ENCODE measurements at regions of chr1 and their contacts with region 1.

Region 1: DNA sequence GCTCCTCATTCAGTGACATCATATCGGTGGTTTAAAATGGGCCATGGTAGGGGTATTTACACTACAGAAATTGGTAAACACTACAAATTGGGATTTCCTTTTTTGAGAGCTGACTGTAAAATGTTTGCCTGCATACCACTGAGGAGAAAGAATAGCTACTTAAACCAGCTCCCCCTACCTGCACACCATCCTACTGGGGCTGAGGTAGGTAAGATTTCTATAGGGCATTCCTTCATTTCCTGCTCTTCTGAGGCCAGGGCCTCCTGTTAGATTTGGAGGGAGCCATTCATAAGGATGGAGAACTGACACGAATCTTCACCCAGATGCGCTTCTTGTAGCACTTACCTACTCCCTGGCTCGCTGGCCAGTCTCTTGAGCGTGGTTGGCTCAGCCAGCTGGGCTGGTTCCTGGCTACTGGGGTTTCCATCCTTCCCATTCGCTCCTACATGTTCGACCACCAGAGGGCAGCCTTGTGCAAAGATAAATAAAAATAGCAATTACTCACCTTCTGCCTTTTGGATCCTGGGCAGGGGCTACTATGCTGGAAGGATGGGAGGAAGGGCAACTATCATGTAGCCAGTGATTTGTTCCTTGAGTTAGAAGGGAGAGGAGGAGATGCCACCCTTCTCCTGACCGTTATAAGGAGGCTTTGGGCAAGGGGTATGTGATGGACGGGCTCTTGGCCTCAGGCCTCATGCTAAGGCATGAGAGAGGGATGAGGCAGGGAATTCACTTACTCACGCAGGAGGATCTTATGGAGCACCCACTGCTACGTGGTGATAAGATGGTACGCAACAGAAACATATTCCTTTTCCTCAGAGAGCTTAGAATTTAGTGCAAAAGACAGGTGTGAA is 10.7 kb downstream of the OPTC start:
- DNase-seq: peak; percentile 86
- H3K4me3 ChIP-seq: no peak overlapping the region; a peak in 1 of 4 replicates
- H3K27ac ChIP-seq: peak overlapping the region in 1 of 2 experiments; percentile 37; a peak in 1 of 4 replicates
- H3K4me1 ChIP-seq: peaks cover 25 to 30% of the 10 kb centered on the region in 2 experiments
- H3K27me3 ChIP-seq: no peaks in the 10 kb centered on the region
- CTCF ChIP-seq: peak; percentile 87
- EP300 ChIP-seq: no peak
- RAD21 ChIP-seq: peak; percentile 92

Region 2: DNA sequence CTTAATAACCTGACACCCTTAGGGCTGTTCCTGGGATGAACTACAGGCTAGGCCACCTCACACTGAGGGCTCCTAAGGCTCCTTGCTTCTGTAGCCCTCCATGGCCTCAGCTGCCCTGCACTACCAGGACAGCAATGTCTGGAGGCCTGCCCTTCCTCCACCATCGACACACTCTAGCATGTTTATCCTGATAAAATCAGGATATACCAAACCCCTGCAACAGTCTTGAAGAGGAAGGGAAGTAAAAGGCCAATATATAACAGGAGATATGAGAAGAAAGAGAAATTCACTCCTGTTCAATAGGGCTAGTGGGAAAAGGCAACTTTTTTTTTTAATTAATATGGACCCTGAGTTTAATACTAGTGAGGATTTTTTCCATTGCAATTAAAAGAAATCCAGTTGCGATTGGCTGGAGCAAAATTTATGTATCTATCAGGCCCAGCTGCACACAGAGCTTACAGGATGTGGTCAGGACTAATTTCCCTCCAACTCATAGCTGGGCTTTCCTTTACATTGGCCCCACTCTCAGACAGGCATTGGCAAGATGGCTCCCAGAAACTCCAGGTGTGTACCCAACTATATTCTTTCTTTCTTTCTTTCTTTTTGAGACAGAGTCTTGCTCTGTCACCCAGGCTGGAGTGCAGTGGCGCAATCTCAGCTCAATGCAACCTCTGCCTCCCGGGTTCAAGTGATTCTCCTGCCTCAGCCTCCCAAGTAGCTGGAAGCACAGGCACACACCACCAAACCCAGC is 108.5 kb after region 1 on chr1:
- CTCF ChIA-PET with region 1: interaction called, 13 read pairs
- POLR2A ChIA-PET with region 1: no interaction called
- DNase-seq: no peak
- H3K4me3 ChIP-seq: no peak overlapping the region
- H3K27ac ChIP-seq: no peak overlapping the region
- H3K4me1 ChIP-seq: peaks cover 0 to 9% of the 10 kb centered on the region in 2 experiments; a peak in 1 of 4 replicates
- H3K27me3 ChIP-seq: no peaks in the 10 kb centered on the region
- CTCF ChIP-seq: no peak
- EP300 ChIP-seq: no peak
- RAD21 ChIP-seq: no peak

Region 3: GRCh38 chr1:203625628-203626019 is 121.0 kb after region 1 on chr1:
- CTCF ChIA-PET with region 1: interaction called, 36 read pairs
- POLR2A ChIA-PET with region 1: interaction called, 3 read pairs
- DNase-seq: peak; percentile 66
- H3K4me3 ChIP-seq: no peak overlapping the region
- H3K27ac ChIP-seq: peak overlapping the region; percentile 86 to 91; a peak in 3 of 4 replicates
- H3K4me1 ChIP-seq: peaks cover 25 to 28% of the 10 kb centered on the region in 2 experiments; a peak in 3 of 4 replicates
- H3K27me3 ChIP-seq: no peaks in the 10 kb centered on the region
- CTCF ChIP-seq: peak; percentile 55
- EP300 ChIP-seq: no peak
- RAD21 ChIP-seq: peak; percentile 90

Region 4: DNA sequence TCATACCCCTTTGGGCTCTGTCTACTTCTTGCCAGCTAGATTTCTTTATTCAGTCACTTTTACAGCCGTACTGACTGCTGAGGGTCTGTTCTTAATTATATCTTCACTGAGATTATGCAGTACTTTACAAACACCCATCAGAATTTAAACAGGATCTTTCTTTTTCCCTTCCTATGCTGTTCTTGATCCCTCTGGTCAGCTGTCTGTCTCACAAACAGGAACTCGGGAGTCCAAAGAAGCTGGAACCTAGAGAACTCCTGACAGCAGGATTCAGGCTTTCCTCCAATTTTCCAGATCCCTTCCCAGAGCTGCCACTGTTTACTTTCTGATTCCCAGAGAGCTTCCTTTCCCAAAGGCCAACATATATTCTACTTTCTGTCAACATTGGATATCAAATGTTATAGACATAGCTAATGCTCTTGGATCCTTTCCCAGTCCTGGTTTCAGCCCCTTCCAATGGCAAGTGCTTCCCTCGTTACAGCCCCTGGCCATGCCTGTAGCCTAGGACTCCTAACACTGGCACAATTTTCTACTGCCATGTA is 181.5 kb after region 1 on chr1:
- CTCF ChIA-PET with region 1: interaction called, 12 read pairs
- POLR2A ChIA-PET with region 1: no interaction called
- DNase-seq: peak; percentile 60
- H3K4me3 ChIP-seq: no peak overlapping the region; a peak in 1 of 4 replicates
- H3K27ac ChIP-seq: peak overlapping the region; percentile 87 to 90
- H3K4me1 ChIP-seq: peaks cover 13 to 16% of the 10 kb centered on the region in 2 experiments; a peak in 3 of 4 replicates
- H3K27me3 ChIP-seq: no peaks in the 10 kb centered on the region
- CTCF ChIP-seq: no peak
- EP300 ChIP-seq: no peak
- RAD21 ChIP-seq: no peak; the same call in 1 of the 2 replicates

Region 5: GRCh38 chr1:203692565-203693470 is 188.2 kb after region 1 on chr1:
- CTCF ChIA-PET with region 1: interaction called, 12 read pairs
- POLR2A ChIA-PET with region 1: no interaction called
- DNase-seq: no peak
- H3K4me3 ChIP-seq: no peak overlapping the region
- H3K27ac ChIP-seq: peak overlapping the region; percentile 51 to 99; a peak in 3 of 4 replicates
- H3K4me1 ChIP-seq: peaks cover 21 to 24% of the 10 kb centered on the region in 2 experiments; a peak in 3 of 4 replicates
- H3K27me3 ChIP-seq: no peaks in the 10 kb centered on the region
- CTCF ChIP-seq: no peak
- EP300 ChIP-seq: peak in 1 of 2 experiments; percentile 31; a peak in 1 of 4 replicates
- RAD21 ChIP-seq: no peak